Naive thymus-derived CD4-positive, alpha-beta T cell (primary cell): ENCODE measurements at regions of chr7 and their contacts with region 1.

Region 1: GRCh38 chr7:83065714-83066113 is 97.0 kb downstream of the PCLO start:
- DNase-seq: no peak
- ATAC-seq: no peak
- H3K4me3 ChIP-seq: no peak overlapping the region
- H3K4me3 Mint-ChIP-seq: no peak overlapping the region
- H3K27ac ChIP-seq: no peak overlapping the region
- H3K27ac Mint-ChIP-seq: no peak overlapping the region
- H3K4me1 ChIP-seq: no peaks in the 10 kb centered on the region
- H3K4me1 Mint-ChIP-seq: no peaks in the 10 kb centered on the region
- H3K27me3 ChIP-seq: no peaks in the 10 kb centered on the region
- H3K27me3 Mint-ChIP-seq: no peaks in the 10 kb centered on the region

Region 2: DNA sequence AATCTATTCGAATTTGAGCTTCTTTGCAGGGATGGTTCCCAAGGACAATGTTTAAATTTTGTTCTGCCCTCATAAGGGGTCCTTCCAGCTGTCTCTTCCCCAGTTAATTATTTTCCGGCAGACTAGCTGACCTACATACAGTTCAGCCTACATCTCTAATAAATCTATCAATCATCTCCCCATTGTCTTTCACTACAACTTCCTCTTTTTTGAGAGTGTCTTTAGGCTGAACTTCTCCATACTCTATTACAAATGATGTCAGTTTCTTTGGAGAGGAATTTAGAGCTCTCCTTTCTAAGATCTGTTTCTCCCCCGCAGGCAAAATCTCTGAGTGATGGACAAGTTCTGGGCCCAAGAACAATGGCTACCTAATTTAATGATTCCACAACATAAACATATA is 25.2 kb before region 1 on chr7:
- CTCF ChIA-PET with region 1: no interaction called
- POLR2A ChIA-PET with region 1: no interaction called
- intact Hi-C with region 1: loop called in 1 of 2 experiments (anchors 2 kb)
- DNase-seq: no peak
- ATAC-seq: no peak
- H3K4me3 ChIP-seq: no peak overlapping the region
- H3K4me3 Mint-ChIP-seq: no peak overlapping the region
- H3K27ac ChIP-seq: no peak overlapping the region
- H3K27ac Mint-ChIP-seq: no peak overlapping the region
- H3K4me1 ChIP-seq: no peaks in the 10 kb centered on the region
- H3K4me1 Mint-ChIP-seq: no peaks in the 10 kb centered on the region
- H3K27me3 ChIP-seq: no peaks in the 10 kb centered on the region
- H3K27me3 Mint-ChIP-seq: no peaks in the 10 kb centered on the region

Region 3: GRCh38 chr7:83096065-83096580 is 30.4 kb after region 1 on chr7:
- CTCF ChIA-PET with region 1: no interaction called
- POLR2A ChIA-PET with region 1: no interaction called
- intact Hi-C with region 1: no loop called
- DNase-seq: no peak
- ATAC-seq: no peak
- H3K4me3 ChIP-seq: no peak overlapping the region
- H3K4me3 Mint-ChIP-seq: no peak overlapping the region
- H3K27ac ChIP-seq: no peak overlapping the region
- H3K27ac Mint-ChIP-seq: no peak overlapping the region
- H3K4me1 ChIP-seq: no peaks in the 10 kb centered on the region
- H3K4me1 Mint-ChIP-seq: no peaks in the 10 kb centered on the region
- H3K27me3 ChIP-seq: no peaks in the 10 kb centered on the region
- H3K27me3 Mint-ChIP-seq: no peaks in the 10 kb centered on the region